MCF 10A (cell line): ENCODE measurements at regions of chr6 and their contacts with region 1.

Region 1: GRCh38 chr6:105484238-105485161 is 81.6 kb upstream of the PREP start:
- DNase-seq: peak; percentile 71
- H3K4me3 Mint-ChIP-seq: peak overlapping the region; percentile 3
- H3K27ac Mint-ChIP-seq: peak overlapping the region; percentile 83
- H3K4me1 Mint-ChIP-seq: peaks cover 36% of the 10 kb centered on the region
- H3K27me3 Mint-ChIP-seq: no peaks in the 10 kb centered on the region
- CTCF ChIP-seq: peak; percentile 80

Region 2: GRCh38 chr6:105733565-105734162 is 249.2 kb after region 1 on chr6:
- CTCF ChIA-PET with region 1: interaction called, 5 read pairs
- POLR2A ChIA-PET with region 1: no interaction called
- intact Hi-C with region 1: loop called (anchors 1 kb)
- DNase-seq: peak; percentile 51
- H3K4me3 Mint-ChIP-seq: no peak overlapping the region
- H3K27ac Mint-ChIP-seq: no peak overlapping the region
- H3K4me1 Mint-ChIP-seq: peaks cover 8% of the 10 kb centered on the region
- H3K27me3 Mint-ChIP-seq: no peaks in the 10 kb centered on the region
- CTCF ChIP-seq: peak; percentile 35

Region 3: GRCh38 chr6:106300944-106301343 is 816.4 kb after region 1 on chr6:
- CTCF ChIA-PET with region 1: interaction called, 18 read pairs
- POLR2A ChIA-PET with region 1: interaction called, 4 read pairs
- intact Hi-C with region 1: loop called (anchors 1 kb)
- DNase-seq: peak; percentile 62
- H3K4me3 Mint-ChIP-seq: no peak overlapping the region
- H3K27ac Mint-ChIP-seq: no peak overlapping the region
- H3K4me1 Mint-ChIP-seq: no peaks in the 10 kb centered on the region
- H3K27me3 Mint-ChIP-seq: no peaks in the 10 kb centered on the region
- CTCF ChIP-seq: peak; percentile 50